K562 (cell line): ENCODE measurements at regions of chr12 and their contacts with region 1.

Region 1: DNA sequence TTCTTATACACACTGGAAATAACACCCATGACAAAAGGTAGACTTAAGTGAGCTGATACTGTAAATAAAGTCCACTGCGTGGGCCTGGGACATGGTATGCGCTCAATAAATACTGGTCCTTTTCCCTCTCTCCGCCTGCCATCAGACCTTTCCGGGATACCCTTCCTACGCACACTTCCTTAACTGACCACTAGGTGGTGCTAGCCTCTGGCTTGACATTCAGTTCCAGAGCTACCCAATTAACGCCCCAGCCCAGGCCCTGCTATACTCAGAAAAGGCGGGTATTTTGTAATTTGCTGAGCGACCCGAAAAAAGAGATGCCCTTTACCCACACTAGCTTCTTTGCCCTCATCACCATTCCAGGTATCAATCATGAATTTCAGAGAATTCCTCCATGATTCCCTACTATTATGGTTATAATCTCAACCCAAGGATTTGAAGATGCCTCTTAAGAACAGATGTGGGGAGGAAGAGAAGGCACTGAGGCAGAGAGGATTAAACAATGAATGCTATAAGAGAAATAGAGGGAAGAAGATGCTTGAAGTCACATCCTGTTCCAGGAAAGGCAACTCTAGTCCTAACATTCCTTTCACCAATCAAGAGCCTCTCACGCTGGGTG is 3.9 kb upstream of the LRP1 start:
- DNase-seq: peak; percentile 73 to 84 (median 76)
- ATAC-seq: peak; percentile 61
- H3K4me3 ChIP-seq: no peak overlapping the region
- H3K27ac ChIP-seq: no peak overlapping the region
- H3K4me1 ChIP-seq: peaks cover 10 to 25% of the 10 kb centered on the region in 2 experiments
- H3K27me3 ChIP-seq: no peaks in the 10 kb centered on the region
- CTCF ChIP-seq: peak; percentile 88 to 92 (median 91)
- EP300 ChIP-seq: no peak
- POLR2A ChIP-seq: no peak
- RAD21 ChIP-seq: peak; percentile 77 to 82

Region 2: GRCh38 chr12:57175428-57176138 is 51.2 kb after region 1 on chr12:
- CTCF ChIA-PET with region 1: interaction called, 18 read pairs
- POLR2A ChIA-PET with region 1: interaction called, 4 read pairs
- in situ Hi-C with region 1: loop called (anchors 5 kb)
- intact Hi-C with region 1: loop called (anchors 1 kb)
- DNase-seq: peak; percentile 82 to 88 (median 86)
- ATAC-seq: peak; percentile 88
- H3K4me3 ChIP-seq: no peak overlapping the region
- H3K27ac ChIP-seq: no peak overlapping the region
- H3K4me1 ChIP-seq: peaks cover 12 to 57% of the 10 kb centered on the region in 2 experiments; a peak in 4 of 5 replicates
- H3K27me3 ChIP-seq: peaks cover 11 to 55% of the 10 kb centered on the region in 2 experiments; a peak in 4 of 5 replicates
- CTCF ChIP-seq: peak; percentile 83 to 97 (median 94)
- EP300 ChIP-seq: no peak
- POLR2A ChIP-seq: no peak
- RAD21 ChIP-seq: peak; percentile 62 to 82

Region 3: GRCh38 chr12:57698414-57698813 is 574.0 kb after region 1 on chr12:
- CTCF ChIA-PET with region 1: no interaction called
- POLR2A ChIA-PET with region 1: no interaction called
- in situ Hi-C with region 1: no loop called
- intact Hi-C with region 1: no loop called
- DNase-seq: no peak
- ATAC-seq: no peak
- H3K4me3 ChIP-seq: no peak overlapping the region
- H3K27ac ChIP-seq: no peak overlapping the region
- H3K4me1 ChIP-seq: peaks cover 4 to 7% of the 10 kb centered on the region in 2 experiments; a peak in 2 of 5 replicates
- H3K27me3 ChIP-seq: no peaks in the 10 kb centered on the region
- CTCF ChIP-seq: no peak
- EP300 ChIP-seq: no peak
- POLR2A ChIP-seq: no peak
- RAD21 ChIP-seq: no peak